Posterior vena cava (tissue), 2 donors: ENCODE measurements at regions of chr11 and their contacts with region 1.

Region 1: GRCh38 chr11:75954039-75954438 is 139.0 kb downstream of the UVRAG start:
- DNase-seq: no peak

Region 2: GRCh38 chr11:74806267-74806666 is 1147.8 kb before region 1 on chr11:
- intact Hi-C with region 1: loop called in 1 of 2 experiments (anchors 5 kb)
- DNase-seq: no peak